ENCODE measurements at regions of chr6 and their contacts with region 1.

Region 1: GRCh38 chr6:96626759-96627364 is 63.9 kb downstream of the FHL5 start:
- DNase-seq: no peak
- ATAC-seq: no peak
- H3K4me3 ChIP-seq: no peak overlapping the region
- H3K27ac ChIP-seq: no peak overlapping the region
- H3K4me1 ChIP-seq: no peaks in the 10 kb centered on the region
- H3K27me3 ChIP-seq: no peaks in the 10 kb centered on the region

Region 2: GRCh38 chr6:96186521-96187222 is 440.2 kb before region 1 on chr6:
- intact Hi-C with region 1: no loop called
- DNase-seq: no peak
- ATAC-seq: no peak
- H3K4me3 ChIP-seq: no peak overlapping the region
- H3K27ac ChIP-seq: no peak overlapping the region
- H3K4me1 ChIP-seq: no peaks in the 10 kb centered on the region
- H3K27me3 ChIP-seq: no peaks in the 10 kb centered on the region

Region 3: DNA sequence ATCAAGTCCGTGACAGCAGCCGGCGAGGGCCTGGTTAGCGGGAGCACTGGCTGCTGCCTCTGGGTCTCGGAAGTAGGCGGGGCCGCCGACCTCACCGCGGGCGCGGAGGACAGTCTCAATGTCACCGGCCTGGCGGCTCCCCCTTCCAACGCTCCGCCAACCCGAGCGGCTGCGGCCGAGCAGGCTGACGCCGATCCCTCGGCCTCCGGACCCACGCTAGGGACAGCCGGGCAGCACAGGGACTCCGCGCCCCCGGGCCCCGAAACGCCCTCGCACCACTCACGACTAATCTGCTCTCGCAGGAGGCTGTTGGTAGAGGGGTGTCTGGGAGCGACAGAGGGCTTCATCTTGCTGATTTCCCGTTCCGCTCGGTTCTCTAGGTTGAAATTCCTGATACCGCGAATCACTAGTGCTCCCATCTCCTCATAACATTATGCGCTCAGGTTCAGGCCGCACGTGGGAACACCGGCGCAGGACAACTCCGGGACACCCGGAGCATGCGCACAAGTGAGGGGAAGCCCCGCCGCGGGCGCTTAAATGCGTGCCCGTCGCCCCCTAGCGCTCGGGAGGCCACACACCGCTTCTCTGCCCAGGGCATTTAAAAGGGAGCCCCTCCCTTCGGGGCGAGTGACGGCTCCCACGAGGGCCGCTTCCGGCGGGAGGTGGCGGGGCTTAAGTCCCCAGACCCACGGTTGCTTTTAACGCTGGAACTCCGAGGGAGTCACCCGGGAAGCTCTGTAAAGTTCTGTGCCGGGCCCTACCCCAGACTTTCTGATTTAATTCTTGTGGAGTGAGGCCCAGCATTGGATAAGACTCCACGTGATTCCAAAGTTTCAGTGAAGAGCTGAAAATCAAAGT is 270.8 kb after region 1 on chr6 and contains the start of gene NDUFAF4:
- intact Hi-C with region 1: loop called in 2 of 4 experiments (anchors 10 kb)
- DNase-seq: peak; percentile 97 to 98 (median 98)
- ATAC-seq: peak; percentile 99
- H3K4me3 ChIP-seq: peak within 1 kb of the TSS; percentile 78
- H3K27ac ChIP-seq: peak within 1 kb of the TSS; percentile 92
- H3K4me1 ChIP-seq: no peaks in the 10 kb centered on the region
- H3K27me3 ChIP-seq: no peaks in the 10 kb centered on the region
- total RNA-seq, gene NDUFAF4: 73.8 to 104 (median 91.4) TPM

Region 4: GRCh38 chr6:97053643-97054411 is 427.0 kb after region 1 on chr6:
- intact Hi-C with region 1: loop called in 2 of 4 experiments (anchors 5 to 10 kb)
- DNase-seq: no peak
- ATAC-seq: no peak
- H3K4me3 ChIP-seq: no peak overlapping the region
- H3K27ac ChIP-seq: no peak overlapping the region
- H3K4me1 ChIP-seq: no peaks in the 10 kb centered on the region
- H3K27me3 ChIP-seq: no peaks in the 10 kb centered on the region

Region 5: GRCh38 chr6:97059473-97059872 is 432.6 kb after region 1 on chr6:
- intact Hi-C with region 1: loop called (anchors 5 to 10 kb)
- DNase-seq: no peak
- ATAC-seq: no peak
- H3K4me3 ChIP-seq: no peak overlapping the region
- H3K27ac ChIP-seq: no peak overlapping the region
- H3K4me1 ChIP-seq: no peaks in the 10 kb centered on the region
- H3K27me3 ChIP-seq: no peaks in the 10 kb centered on the region

Region 6: DNA sequence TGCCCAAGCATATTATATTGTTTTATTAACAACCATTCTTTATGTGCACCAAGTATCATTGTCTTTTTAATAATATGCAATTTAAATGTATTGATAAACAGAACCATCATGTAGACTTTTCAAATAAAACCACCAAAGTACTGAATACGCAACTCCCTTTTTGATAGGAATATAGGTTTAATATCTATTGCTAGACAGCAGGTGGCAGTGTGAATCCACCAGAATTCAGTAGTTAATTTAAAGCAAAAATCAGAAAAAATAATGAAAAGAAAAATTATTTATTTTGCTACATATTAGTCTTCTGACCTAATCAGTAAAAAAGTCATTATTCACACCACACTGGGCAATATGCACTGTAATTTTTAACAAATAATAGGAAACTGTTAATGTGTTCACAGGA is 441.3 kb after region 1 on chr6:
- intact Hi-C with region 1: loop called in 2 of 4 experiments (anchors 5 kb)
- DNase-seq: no peak
- ATAC-seq: no peak
- H3K4me3 ChIP-seq: no peak overlapping the region
- H3K27ac ChIP-seq: no peak overlapping the region
- H3K4me1 ChIP-seq: no peaks in the 10 kb centered on the region
- H3K27me3 ChIP-seq: no peaks in the 10 kb centered on the region